A673 (cell line): ENCODE measurements at regions of chr2 and their contacts with region 1.

Region 1: GRCh38 chr2:74162951-74163350 is 15.2 kb upstream of the BOLA3 start:
- DNase-seq: no peak
- H3K4me3 ChIP-seq: no peak overlapping the region
- H3K27ac ChIP-seq: no peak overlapping the region
- H3K4me1 ChIP-seq: no peaks in the 10 kb centered on the region
- H3K27me3 ChIP-seq: no peaks in the 10 kb centered on the region
- CTCF ChIP-seq: no peak

Region 2: DNA sequence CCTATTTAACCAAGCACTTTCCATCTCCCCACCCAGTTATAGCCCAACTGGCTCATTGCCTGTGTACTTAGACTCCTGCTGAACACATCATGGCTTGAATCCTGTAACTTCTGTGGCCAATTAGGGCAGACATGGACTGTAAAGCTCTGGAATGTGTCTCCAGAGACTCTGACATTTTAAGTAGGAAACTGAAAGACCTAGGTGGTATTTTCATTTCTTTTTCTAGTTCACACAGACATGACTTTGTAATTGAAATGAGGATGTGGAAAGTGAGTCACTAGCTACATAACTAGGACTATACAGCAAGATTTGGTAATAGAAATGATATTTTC is 403.8 kb after region 1 on chr2:
- CTCF ChIA-PET with region 1: no interaction called
- POLR2A ChIA-PET with region 1: interaction called, 30 read pairs
- intact Hi-C with region 1: no loop called
- DNase-seq: peak; percentile 85
- H3K4me3 ChIP-seq: no peak overlapping the region
- H3K27ac ChIP-seq: no peak overlapping the region
- H3K4me1 ChIP-seq: no peaks in the 10 kb centered on the region
- H3K27me3 ChIP-seq: no peaks in the 10 kb centered on the region
- CTCF ChIP-seq: no peak